ENCODE measurements at regions of chr20 and their contacts with region 1.

Region 1: GRCh38 chr20:2172305-2173175 is 70.9 kb downstream of the STK35 start:
- H3K4me3 ChIP-seq: no peak overlapping the region
- H3K27ac ChIP-seq: no peak overlapping the region
- H3K4me1 ChIP-seq: no peaks in the 10 kb centered on the region
- CTCF ChIP-seq: peak; percentile 84

Region 2: DNA sequence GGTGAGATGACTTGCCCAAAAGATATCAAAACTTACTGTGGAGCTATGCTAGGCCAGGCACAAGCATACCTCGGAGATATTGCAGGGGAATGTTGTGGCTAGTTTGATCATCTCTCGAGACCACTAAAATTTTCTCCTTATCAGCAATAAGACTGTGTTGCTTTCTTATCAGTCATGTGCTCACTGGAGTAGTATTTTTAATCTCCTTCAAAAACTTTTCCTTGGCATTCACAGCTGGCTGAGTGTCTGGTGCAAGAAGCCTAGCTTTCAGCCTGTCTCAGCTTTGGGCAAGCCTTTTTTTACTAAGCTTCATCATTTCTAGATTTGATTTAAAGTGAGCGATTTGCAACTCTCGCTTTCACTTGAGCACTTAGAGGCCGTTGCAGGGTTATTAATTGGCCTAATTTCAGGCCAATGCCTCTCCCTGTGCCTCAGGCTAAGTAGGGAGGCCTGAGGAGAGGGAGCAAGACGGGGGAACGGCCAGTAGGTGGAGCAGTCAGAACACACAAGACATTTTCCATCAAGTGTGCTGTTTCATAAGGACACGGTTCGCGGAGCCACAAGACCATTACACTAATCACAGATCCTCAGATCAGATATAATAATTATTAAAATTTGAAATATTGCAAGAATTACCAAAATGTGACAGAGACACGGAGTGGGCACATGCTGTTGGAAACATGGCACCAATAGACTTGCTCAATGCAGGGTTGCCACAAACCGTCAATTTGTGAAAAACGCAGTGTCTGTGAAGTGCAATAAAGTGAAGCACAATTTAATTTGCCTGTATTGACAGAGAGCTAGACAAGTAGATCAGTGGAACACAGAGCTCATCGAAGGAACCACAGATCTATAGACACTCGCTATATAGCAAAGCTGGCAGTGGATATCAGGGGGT is 408.2 kb before region 1 on chr20:
- CTCF ChIA-PET with region 1: interaction called, 23 read pairs
- POLR2A ChIA-PET with region 1: interaction called, 3 read pairs
- H3K4me3 ChIP-seq: no peak overlapping the region
- H3K27ac ChIP-seq: no peak overlapping the region
- H3K4me1 ChIP-seq: 0 out of 2 replicates have a peak, but pooled peaks cover 3% of the 10 kb centered on the region
- CTCF ChIP-seq: 0 out of 2 replicates have a peak, but pooled peaks have one; percentile 57

Region 3: DNA sequence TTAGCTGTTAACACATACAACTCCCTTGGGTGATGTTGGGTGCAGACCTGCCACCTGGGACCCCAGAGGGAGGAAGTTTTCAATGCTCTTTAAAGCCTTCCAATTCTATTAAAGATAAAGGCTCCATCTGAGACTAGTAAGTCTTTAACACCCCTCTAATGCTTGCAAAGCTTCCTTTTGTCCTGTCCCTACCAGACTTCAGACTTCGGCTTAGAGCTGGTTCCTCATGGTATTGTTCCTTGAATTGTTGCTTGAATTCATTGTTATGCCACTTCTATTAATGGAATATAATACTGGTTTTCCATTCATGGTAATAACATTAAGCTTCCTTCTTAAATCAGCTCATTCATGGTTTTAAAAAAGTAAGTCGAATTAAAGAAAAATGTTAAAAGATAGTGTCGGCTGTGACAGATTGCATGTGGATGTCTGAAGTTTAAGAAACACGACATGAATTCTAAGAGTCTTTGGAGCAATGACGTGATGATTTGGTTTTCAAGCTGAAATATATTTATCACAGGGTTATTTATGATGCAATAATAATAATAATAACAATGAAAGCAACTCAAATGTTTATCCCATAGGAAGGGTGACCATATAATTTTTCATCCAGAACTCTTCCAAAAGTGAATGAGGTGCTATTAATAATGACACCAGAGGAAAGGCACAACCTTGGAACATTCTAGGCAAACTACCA is 200.5 kb before region 1 on chr20:
- CTCF ChIA-PET with region 1: interaction called, 62 read pairs
- POLR2A ChIA-PET with region 1: no interaction called
- H3K4me3 ChIP-seq: no peak overlapping the region
- H3K27ac ChIP-seq: no peak overlapping the region
- H3K4me1 ChIP-seq: no peaks in the 10 kb centered on the region
- CTCF ChIP-seq: no peak

Region 4: GRCh38 chr20:2093159-2093781 is 79.3 kb before region 1 on chr20:
- CTCF ChIA-PET with region 1: interaction called, 27 read pairs
- POLR2A ChIA-PET with region 1: no interaction called
- H3K4me3 ChIP-seq: no peak overlapping the region
- H3K27ac ChIP-seq: no peak overlapping the region
- H3K4me1 ChIP-seq: no peaks in the 10 kb centered on the region
- CTCF ChIP-seq: no peak

Region 5: GRCh38 chr20:2162125-2162822 is 10.3 kb before region 1 on chr20:
- CTCF ChIA-PET with region 1: interaction called, 33 read pairs
- POLR2A ChIA-PET with region 1: no interaction called
- H3K4me3 ChIP-seq: no peak overlapping the region
- H3K27ac ChIP-seq: no peak overlapping the region
- H3K4me1 ChIP-seq: no peaks in the 10 kb centered on the region
- CTCF ChIP-seq: no peak